Endothelial cell of umbilical vein (primary cell): ENCODE measurements at regions of chr7 and their contacts with region 1.

Region 1: DNA sequence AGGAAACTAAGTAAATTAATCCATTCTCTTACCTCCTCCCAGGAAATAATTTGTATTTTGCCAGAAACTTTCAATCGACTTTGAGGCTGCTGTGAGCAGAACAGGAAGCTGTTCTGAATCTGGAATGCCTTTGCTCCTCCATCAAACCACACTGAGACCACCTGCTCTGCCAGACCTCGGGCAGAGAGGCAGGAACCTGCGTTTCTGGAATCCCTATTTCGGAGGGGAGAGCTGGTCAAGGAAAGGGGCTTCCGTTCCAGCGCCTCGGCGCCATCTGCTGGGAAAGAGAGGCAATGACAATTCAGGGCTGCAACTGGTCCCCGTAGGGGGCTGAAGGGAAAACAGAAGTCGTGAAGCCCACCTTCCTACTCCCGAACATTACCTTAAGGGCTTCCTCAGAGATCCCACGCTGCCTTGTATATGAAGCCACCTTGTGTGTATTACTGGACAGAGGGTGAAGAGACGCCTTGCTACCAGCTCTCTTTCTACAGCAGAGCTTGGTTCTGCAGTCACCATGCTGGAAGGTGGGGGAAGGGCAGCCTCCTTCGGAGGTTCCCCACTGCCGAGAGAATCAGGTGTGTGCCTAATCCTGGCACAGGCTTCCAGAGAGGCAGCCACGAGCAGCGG is 31.2 kb downstream of the ZNF467 start:
- DNase-seq: peak; percentile 71
- H3K4me3 ChIP-seq: peak overlapping the region in 2 of 3 experiments; percentile 6 to 10
- H3K27ac ChIP-seq: no peak overlapping the region
- H3K4me1 ChIP-seq: no peaks in the 10 kb centered on the region
- H3K27me3 ChIP-seq: peaks cover 0 to 7% of the 10 kb centered on the region in 2 experiments
- CTCF ChIP-seq: peak; percentile 85 to 86
- POLR2A ChIP-seq: no peak

Region 2: DNA sequence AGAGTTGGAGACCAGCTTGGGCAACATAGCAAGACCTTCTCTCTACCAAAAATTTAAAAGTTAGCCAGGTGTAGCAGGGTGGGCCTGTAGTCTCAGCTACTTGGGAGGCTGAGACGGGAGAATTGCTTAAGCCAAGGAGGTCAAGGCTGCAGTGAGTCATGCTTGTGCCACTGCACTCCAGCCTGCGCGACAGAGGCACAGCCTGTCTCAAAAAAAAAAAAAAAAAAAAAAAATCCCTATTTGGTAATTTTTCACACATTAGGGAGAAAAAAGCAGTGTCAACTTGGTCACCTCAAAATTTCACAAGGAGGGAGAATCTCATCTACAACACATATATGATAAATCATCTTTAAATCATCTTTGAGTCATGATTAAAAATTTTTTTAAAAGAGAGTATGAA is 601.4 kb before region 1 on chr7:
- CTCF ChIA-PET with region 1: no interaction called
- POLR2A ChIA-PET with region 1: no interaction called
- dilution Hi-C with region 1: no loop called
- intact Hi-C with region 1: no loop called
- DNase-seq: no peak
- H3K4me3 ChIP-seq: no peak overlapping the region
- H3K27ac ChIP-seq: no peak overlapping the region
- H3K4me1 ChIP-seq: no peaks in the 10 kb centered on the region
- H3K27me3 ChIP-seq: no peaks in the 10 kb centered on the region
- CTCF ChIP-seq: no peak
- POLR2A ChIP-seq: no peak

Region 3: DNA sequence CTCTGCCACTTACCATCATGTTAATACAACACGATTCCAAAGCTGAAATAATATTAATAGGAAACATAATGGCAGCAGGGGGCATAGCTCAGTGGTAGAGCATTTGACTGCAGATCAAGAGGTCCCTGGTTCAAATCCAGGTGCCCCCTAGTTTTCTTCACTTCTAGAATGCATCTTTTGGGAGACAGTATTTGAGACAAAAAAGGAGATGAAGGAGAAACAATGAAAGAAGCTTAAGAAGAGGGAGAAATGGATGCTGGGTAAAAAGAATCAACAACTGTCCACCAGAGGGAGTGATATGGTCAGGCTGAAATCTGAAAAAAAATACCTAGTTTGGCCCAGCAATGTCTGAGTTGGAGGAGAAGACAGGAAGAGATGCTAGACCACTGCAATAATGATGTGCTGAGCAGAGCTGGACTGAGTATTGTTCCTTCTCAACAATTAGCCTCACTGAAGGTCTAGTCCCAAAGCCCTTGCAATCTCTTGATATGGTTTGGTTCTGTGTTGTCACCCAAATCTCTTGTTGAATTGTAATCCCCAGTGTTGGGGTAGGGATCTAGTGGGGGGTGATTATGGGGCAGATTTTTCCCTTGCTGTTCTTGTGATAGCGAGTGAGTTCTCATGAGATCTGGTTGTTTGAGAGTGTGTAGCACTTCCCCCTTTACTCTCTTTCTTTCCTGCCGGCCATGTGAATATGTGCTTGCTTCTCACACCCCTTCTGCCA is 431.9 kb before region 1 on chr7:
- CTCF ChIA-PET with region 1: interaction called, 10 read pairs
- POLR2A ChIA-PET with region 1: no interaction called
- dilution Hi-C with region 1: no loop called
- intact Hi-C with region 1: no loop called
- DNase-seq: peak; percentile 69
- H3K4me3 ChIP-seq: no peak overlapping the region
- H3K27ac ChIP-seq: no peak overlapping the region
- H3K4me1 ChIP-seq: no peaks in the 10 kb centered on the region
- H3K27me3 ChIP-seq: peaks cover 2 to 5% of the 10 kb centered on the region in 2 experiments
- CTCF ChIP-seq: peak; percentile 50 to 61
- POLR2A ChIP-seq: no peak

Region 4: GRCh38 chr7:149586646-149587332 is 155.4 kb before region 1 on chr7:
- CTCF ChIA-PET with region 1: no interaction called
- POLR2A ChIA-PET with region 1: no interaction called
- dilution Hi-C with region 1: no loop called
- intact Hi-C with region 1: no loop called
- DNase-seq: no peak
- H3K4me3 ChIP-seq: no peak overlapping the region
- H3K27ac ChIP-seq: no peak overlapping the region
- H3K4me1 ChIP-seq: no peaks in the 10 kb centered on the region
- H3K27me3 ChIP-seq: no peaks in the 10 kb centered on the region
- CTCF ChIP-seq: no peak
- POLR2A ChIP-seq: no peak

Region 5: GRCh38 chr7:149598721-149599306 is 143.4 kb before region 1 on chr7:
- CTCF ChIA-PET with region 1: no interaction called
- POLR2A ChIA-PET with region 1: no interaction called
- dilution Hi-C with region 1: no loop called
- intact Hi-C with region 1: no loop called
- DNase-seq: peak; percentile 27
- H3K4me3 ChIP-seq: no peak overlapping the region
- H3K27ac ChIP-seq: no peak overlapping the region
- H3K4me1 ChIP-seq: no peaks in the 10 kb centered on the region
- H3K27me3 ChIP-seq: no peaks in the 10 kb centered on the region
- CTCF ChIP-seq: peak in 1 of 2 donors; percentile 48
- POLR2A ChIP-seq: no peak

Region 6: GRCh38 chr7:149669121-149669818 is 72.9 kb before region 1 on chr7:
- CTCF ChIA-PET with region 1: interaction called, 234 read pairs
- POLR2A ChIA-PET with region 1: no interaction called
- dilution Hi-C with region 1: no loop called
- intact Hi-C with region 1: loop called (anchors 1 kb)
- DNase-seq: peak; percentile 42
- H3K4me3 ChIP-seq: no peak overlapping the region
- H3K27ac ChIP-seq: no peak overlapping the region
- H3K4me1 ChIP-seq: no peaks in the 10 kb centered on the region
- H3K27me3 ChIP-seq: peaks cover 5 to 16% of the 10 kb centered on the region in 2 experiments
- CTCF ChIP-seq: peak; percentile 27 to 34
- POLR2A ChIP-seq: no peak

Region 7: DNA sequence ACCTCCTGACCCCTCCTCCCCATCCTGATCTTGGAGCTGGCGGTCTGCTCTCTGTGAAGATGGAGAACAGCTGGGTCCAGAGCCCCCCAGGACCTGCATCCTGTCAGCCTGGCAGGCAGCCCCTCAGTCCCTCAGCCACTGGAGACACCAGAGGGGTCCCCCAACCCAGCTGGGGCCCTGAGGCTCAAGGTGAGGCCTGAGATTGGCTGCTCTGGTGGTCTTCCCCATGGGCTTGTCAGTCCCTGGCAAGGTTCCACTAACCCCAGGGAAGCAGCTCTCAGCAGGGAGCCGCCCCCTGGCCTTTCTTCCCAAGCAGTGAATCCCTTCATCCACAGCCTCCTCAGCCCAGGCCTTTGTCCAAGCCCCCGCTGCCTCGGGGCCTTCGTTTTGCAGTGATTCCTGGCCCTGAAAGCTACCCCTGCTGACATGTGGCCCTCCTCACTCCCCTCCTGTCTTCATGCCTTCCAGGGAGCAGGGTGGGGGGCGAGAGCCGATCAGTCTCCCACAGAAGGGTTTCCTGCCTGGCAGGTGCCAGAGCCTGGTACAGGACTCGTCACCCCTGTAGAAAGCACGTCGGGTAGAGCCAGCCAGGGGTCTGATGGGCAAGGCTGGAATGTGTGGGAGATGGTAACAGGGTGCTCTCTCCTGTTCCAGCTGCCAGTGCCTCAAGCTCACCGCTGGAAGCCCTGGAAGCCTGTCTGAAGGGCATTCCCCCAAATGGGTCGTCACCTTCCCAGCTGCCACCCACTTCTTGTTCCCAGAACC is 17.3 kb before region 1 on chr7:
- CTCF ChIA-PET with region 1: interaction called, 39 read pairs
- POLR2A ChIA-PET with region 1: no interaction called
- dilution Hi-C with region 1: no loop called
- intact Hi-C with region 1: no loop called
- DNase-seq: no peak
- H3K4me3 ChIP-seq: no peak overlapping the region
- H3K27ac ChIP-seq: no peak overlapping the region
- H3K4me1 ChIP-seq: no peaks in the 10 kb centered on the region
- H3K27me3 ChIP-seq: no peaks in the 10 kb centered on the region
- CTCF ChIP-seq: no peak
- POLR2A ChIP-seq: no peak

Region 8: DNA sequence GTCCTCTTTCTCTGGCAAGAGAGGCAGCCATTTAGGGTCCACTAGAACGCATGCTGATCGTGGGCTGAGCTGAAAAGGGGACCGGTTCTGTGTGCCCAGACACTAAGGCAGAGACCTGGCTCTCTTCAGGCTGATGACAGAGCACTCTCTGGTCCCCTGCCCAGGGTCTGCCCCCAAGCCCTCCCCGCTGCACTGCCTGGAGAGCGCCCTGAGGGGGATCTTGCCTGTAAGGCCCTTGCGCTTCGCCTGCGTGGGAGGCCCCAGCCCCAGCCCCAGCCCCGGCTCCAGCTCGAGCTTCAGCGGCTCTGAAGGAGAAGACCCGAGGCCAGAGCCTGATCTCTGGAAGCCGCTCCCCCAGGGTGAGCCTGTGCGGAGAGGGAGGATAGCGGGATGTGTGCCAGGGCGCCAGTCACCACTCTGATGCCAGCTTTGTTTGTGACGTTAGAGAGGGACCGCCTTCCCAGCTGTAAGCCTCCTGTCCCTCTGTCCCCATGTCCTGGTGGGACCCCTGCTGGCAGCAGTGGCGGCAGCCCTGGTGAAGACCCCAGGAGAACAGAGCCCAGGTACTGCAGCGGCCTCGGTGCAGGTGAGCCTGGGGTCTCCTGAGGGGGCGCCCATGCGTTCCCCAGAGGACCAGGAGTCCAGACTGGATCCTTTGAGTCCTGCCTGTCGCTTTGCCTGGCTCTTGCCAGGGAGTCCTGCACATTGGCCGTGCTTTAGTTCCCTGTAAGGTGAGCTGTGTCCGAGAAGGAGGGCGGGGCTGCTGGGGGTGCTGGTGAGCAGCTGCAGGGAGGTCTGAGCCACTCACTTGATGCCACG is 12.0 kb before region 1 on chr7:
- CTCF ChIA-PET with region 1: interaction called, 39 read pairs
- POLR2A ChIA-PET with region 1: no interaction called
- dilution Hi-C with region 1: no loop called
- intact Hi-C with region 1: no loop called
- DNase-seq: no peak
- H3K4me3 ChIP-seq: no peak overlapping the region
- H3K27ac ChIP-seq: no peak overlapping the region
- H3K4me1 ChIP-seq: no peaks in the 10 kb centered on the region
- H3K27me3 ChIP-seq: no peaks in the 10 kb centered on the region
- CTCF ChIP-seq: no peak
- POLR2A ChIP-seq: no peak

Region 9: GRCh38 chr7:149753401-149754233 is 11.4 kb after region 1 on chr7:
- CTCF ChIA-PET with region 1: interaction called, 33 read pairs
- POLR2A ChIA-PET with region 1: no interaction called
- dilution Hi-C with region 1: no loop called
- intact Hi-C with region 1: no loop called
- DNase-seq: peak; percentile 55
- H3K4me3 ChIP-seq: no peak overlapping the region
- H3K27ac ChIP-seq: no peak overlapping the region
- H3K4me1 ChIP-seq: no peaks in the 10 kb centered on the region
- H3K27me3 ChIP-seq: peaks cover 0 to 2% of the 10 kb centered on the region in 2 experiments
- CTCF ChIP-seq: peak; percentile 60 to 72
- POLR2A ChIP-seq: no peak

Region 10: GRCh38 chr7:149771721-149772240 is 29.6 kb after region 1 on chr7:
- CTCF ChIA-PET with region 1: interaction called, 17 read pairs
- POLR2A ChIA-PET with region 1: no interaction called
- dilution Hi-C with region 1: no loop called
- intact Hi-C with region 1: loop called (anchors 2 kb)
- DNase-seq: peak; percentile 95
- H3K4me3 ChIP-seq: peak overlapping the region; percentile 11 to 68 (median 44)
- H3K27ac ChIP-seq: no peak overlapping the region
- H3K4me1 ChIP-seq: peaks cover 19% of the 10 kb centered on the region
- H3K27me3 ChIP-seq: no peaks in the 10 kb centered on the region
- CTCF ChIP-seq: no peak
- POLR2A ChIP-seq: peak; percentile 51

Region 11: GRCh38 chr7:149854611-149855360 is 112.6 kb after region 1 on chr7:
- CTCF ChIA-PET with region 1: no interaction called
- POLR2A ChIA-PET with region 1: no interaction called
- dilution Hi-C with region 1: no loop called
- intact Hi-C with region 1: no loop called
- DNase-seq: no peak
- H3K4me3 ChIP-seq: no peak overlapping the region
- H3K27ac ChIP-seq: no peak overlapping the region
- H3K4me1 ChIP-seq: no peaks in the 10 kb centered on the region
- H3K27me3 ChIP-seq: no peaks in the 10 kb centered on the region
- CTCF ChIP-seq: no peak
- POLR2A ChIP-seq: no peak